Cardiac septum (tissue), 1 donor: ENCODE measurements at regions of chr4 and their contacts with region 1.

Region 1: GRCh38 chr4:185640811-185641675 is 105.7 kb upstream of the PDLIM3 start:
- DNase-seq: no peak

Region 2: GRCh38 chr4:185171373-185172071 is 469.5 kb before region 1 on chr4:
- intact Hi-C with region 1: no loop called
- DNase-seq: no peak

Region 3: DNA sequence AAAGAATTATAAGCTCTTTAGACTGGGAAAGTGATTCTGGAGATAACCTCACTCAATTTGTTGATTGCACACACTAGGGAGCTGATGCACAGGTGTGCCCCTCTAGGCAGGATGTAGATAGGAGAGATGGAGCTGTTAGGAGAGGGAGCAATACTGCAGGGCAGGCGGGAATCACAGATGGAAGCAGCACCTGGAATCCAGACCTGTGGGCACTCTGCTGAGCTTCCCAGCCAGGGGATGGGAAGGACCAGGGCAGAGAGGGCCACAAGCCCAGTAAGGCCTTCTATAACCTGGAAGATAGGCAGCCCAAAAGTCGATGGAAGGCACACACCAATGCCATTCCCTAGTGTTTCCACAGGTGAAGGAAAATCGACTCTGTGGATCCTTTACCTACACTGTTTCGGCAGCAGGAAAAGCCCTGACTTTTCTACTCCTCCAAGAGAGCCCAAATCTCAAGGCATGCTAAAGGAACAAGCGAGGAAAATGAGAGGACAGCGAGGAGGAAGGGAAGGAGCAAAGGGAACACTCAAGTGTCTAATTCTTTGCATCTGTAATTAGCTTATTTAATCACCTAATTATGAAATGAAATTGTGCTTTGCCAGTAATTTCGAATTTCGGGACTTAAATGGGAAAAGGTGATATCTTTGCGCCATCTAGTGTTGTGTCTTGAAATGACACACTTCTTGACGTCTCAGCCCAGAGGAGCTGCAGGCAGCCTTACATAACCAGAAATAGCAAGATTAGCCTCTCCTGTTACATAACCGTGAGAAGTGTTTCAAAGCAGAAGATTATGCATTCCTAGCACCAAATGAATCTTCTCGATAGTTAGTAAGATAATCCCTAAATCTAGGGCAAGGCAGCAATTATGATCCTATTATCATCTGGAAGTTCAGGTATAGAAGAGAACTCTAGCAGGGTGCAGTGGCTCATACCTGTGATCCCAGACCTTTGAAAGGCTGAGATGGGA is 396.9 kb after region 1 on chr4:
- intact Hi-C with region 1: loop called (anchors 5 kb)
- DNase-seq: no peak